Right ventricle myocardium inferior (tissue), 1 donor: ENCODE measurements at regions of chr11 and their contacts with region 1.

Region 1: DNA sequence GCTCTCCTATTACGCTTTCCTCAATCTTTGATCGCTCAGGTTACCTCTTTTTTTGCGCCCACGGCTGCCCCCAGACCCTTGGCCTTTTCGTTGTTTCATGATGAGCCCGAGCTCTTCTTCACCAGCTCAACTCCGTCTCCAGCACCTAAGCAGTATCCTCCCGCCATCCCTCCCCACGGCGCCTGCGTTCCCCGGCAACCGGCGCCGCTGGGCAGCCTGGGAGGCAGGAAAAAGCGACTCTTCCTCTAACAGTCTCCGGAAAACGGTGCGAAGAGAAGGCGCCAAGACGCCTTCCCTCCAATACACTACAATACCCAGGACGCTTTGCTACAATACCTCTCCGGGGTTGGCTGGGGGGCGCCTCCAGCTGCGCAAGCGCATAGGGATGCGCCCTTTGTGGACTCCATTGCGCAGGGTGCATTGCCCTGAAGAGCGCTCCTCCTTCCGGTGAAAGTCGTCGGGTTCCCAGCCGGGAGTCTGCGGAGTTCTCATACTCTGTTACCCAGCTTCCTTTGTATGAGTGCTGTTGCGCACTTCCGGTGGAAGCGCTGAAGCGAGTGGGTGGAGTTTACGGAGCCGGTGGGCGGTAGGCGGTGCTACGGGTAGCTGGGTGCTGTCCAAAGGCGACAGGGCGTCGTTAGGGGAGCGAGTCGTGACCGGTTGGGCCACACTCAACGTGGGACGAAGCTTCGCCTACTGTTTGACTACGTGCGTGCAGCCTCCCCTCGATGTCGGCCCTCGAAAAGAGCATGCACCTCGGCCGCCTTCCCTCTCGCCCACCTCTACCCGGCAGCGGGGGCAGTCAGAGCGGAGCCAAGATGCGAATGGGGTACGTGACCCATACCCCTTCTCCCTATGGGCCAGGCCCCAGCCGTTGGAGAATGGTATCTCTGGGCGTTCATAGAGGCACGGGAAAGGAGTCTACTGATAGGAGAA is at the starts of genes C2CD3 and PPME1:
- DNase-seq: peak; percentile 98
- ATAC-seq: peak; percentile 99
- total RNA-seq, gene C2CD3: 9.6 TPM
- total RNA-seq, gene PPME1: 34.6 TPM

Region 2: DNA sequence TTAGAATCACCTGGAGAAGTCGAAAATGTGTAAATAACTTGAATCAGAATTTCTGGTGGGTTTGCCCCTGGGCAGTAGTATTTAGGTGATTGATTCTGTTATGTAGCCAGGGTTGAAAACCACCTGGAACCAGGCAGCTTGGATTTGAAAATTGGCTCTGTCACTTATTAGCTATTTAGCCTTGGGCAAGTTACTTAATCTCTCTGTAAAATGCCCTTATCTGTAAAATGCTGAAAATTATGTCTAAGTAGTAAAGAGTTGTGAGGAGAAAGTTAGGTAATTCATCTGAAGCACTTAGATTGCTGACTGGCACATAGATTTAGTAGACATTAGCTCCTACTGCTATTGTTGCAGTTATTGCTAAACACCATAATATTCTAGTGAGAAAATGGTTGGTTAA is 49.4 kb after region 1 on chr11:
- intact Hi-C with region 1: no loop called
- DNase-seq: no peak
- ATAC-seq: no peak

Region 3: DNA sequence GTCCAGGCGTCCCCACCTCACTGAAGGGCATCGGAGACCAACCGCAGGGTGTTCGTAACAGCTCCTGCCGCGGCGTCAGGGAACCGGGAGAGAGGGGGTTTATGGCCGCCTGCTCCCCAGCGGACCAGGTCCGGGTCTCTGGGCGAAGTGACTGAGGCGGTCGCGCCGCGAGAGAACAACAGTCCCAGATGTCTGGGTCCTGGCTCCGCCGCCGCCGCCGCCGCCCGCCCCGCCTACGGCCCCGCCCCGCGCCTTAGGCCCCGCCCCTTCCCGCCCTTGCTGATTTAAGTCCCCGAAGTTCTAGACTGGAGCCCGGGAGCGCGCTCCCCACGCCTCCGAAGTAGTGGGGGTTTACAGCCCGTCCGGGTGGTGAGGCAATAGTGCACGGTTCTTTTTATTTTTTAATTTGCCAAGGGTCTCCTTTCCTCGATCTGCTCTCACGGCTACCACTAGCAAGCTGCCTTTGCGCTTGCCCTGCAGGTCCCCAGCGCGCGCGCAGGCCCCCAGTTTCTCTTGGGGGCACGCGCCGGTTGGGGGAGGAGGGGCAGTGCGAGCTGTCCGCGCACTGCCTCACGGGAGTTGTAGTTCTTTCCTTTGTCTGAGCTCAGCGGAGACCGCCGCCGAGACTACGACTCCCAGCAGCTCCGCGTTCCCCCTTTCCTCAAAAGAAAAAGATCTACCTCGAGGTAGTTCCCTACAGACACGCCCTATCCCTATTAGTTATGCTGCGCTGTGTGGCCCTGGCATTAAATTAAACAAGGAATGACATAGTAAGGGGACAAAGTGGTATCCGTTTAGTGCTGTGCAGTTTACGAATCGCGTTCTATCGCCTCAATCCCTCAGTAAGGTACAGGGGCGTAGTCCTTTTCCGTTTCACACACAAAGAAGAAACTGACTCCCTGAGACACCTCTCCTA is 227.5 kb after region 1 on chr11 and contains the start of gene PGM2L1:
- intact Hi-C with region 1: loop called (anchors 10 kb)
- DNase-seq: peak; percentile 94
- ATAC-seq: peak; percentile 98
- total RNA-seq, gene PGM2L1: 2.1 TPM